Adrenal gland (tissue), 19 donors: ENCODE measurements at regions of chr1 and their contacts with region 1.

Region 1: DNA sequence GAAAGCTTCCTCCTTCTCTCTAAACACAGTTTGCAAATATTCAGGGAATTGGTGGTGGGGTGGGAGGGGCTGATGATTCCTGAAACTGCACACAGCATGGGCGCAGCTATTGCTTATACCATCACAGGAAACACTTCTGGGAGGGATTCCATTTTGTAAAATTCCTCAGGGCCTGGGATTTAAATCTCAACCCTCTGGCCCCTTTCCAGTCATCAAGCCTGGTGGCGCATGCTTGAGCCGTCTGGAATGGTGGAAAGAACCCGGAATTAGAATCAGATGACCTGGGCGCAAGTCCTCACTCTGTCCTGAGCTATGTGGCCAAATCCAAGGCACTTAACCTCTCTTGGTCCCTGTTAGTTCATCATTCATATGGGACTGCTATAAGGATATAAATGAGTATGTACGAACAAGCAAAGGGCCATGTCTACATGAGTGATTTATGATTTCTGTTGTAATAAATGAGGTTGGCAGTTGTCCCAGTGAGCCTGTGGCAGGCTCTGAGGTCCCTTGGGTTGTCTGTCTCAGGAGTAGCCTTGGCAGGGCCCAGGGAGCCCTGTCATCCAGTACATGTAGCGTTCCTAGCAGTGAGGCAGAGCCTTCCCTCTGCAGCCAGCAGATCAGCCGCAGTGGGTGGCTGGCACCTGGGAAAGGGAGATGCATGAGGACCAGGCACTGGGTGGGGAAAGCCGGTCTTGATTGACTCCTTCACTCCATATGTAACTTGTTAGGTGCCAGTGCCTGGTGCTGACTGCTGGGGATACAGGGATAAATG is 72.0 kb downstream of the MAN1C1 start:
- DNase-seq: peak; percentile 50 to 88 (median 64)
- H3K4me3 ChIP-seq: no peak overlapping the region
- H3K27ac ChIP-seq: peak overlapping the region in 4 of 5 donors; percentile 20 to 74 (median 46)
- H3K4me1 ChIP-seq: peaks cover 3 to 36% of the 10 kb centered on the region in 2 donors
- H3K27me3 ChIP-seq: no peaks in the 10 kb centered on the region
- CTCF ChIP-seq: no peak
- POLR2A ChIP-seq: peak in 1 of 2 donors; percentile 37

Region 2: DNA sequence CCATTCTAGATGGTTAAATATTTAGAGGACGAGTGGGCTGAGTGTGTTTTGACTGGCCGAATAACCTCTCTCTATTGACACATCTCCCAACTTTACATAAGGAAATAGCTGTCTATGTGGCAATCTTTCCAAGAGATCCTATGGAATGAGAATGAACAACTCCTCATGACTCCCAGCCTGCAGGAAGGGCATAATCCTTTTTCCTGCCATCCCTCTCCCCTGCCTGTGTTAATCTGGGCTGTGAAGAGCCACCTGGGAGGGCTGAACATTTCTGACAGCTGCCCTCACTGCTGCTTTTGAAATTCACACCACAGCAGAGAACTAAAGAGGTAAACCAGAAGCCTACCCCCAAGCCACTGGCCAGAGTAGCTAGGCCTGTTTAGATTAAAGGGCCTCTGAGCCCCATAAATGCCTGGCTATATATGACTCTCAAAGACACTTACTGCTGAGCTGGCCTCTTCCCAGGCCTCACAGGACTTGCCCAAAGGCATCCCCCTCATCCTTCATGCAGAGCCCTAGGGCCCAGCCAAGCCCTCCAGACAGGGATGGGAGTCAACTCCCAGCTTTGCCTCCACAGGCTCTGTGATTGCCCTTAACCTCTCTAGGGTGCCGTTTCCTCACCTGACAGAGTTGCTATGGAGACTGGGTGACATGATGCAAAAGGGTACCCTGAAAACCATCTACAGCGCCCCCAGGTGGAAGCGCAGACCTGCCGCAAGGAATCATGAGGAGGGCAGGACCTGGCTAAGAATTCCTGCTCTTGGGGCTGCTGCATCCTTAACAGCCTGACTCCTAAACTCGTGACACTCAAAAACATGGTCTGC is 187.1 kb before region 1 on chr1:
- intact Hi-C with region 1: no loop called
- DNase-seq: peak in 2 of 7 donors; percentile 22 to 46
- H3K4me3 ChIP-seq: no peak overlapping the region
- H3K27ac ChIP-seq: no peak overlapping the region
- H3K4me1 ChIP-seq: peaks cover 0 to 8% of the 10 kb centered on the region in 2 donors
- H3K27me3 ChIP-seq: no peaks in the 10 kb centered on the region
- CTCF ChIP-seq: peak in 3 of 6 experiments; percentile 5 to 9 (median 6)
- POLR2A ChIP-seq: no peak

Region 3: DNA sequence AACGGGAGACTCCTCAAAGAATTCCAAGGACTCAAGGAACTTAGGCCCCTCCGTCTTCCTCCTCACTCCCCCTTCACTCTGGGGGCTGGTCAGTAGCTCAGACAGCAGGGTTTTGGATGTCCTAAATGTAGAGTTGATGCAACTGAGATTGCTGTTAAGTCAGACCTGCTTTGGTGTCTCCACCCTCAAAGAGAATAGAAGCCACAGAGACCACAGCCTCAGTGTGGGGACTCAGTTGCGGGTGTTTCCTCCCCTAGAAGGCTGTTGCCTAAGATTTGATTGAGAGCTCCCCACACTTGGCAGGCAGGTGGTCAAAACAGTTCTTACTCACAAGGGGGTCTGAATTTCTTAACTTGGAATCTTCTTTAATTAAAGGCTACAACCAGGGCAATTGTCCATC is 64.4 kb before region 1 on chr1:
- intact Hi-C with region 1: loop called in 1 of 2 experiments (anchors 10 kb)
- DNase-seq: no peak
- H3K4me3 ChIP-seq: no peak overlapping the region
- H3K27ac ChIP-seq: no peak overlapping the region
- H3K4me1 ChIP-seq: peaks cover 0 to 34% of the 10 kb centered on the region in 2 donors
- H3K27me3 ChIP-seq: no peaks in the 10 kb centered on the region
- CTCF ChIP-seq: no peak
- POLR2A ChIP-seq: no peak

Region 4: DNA sequence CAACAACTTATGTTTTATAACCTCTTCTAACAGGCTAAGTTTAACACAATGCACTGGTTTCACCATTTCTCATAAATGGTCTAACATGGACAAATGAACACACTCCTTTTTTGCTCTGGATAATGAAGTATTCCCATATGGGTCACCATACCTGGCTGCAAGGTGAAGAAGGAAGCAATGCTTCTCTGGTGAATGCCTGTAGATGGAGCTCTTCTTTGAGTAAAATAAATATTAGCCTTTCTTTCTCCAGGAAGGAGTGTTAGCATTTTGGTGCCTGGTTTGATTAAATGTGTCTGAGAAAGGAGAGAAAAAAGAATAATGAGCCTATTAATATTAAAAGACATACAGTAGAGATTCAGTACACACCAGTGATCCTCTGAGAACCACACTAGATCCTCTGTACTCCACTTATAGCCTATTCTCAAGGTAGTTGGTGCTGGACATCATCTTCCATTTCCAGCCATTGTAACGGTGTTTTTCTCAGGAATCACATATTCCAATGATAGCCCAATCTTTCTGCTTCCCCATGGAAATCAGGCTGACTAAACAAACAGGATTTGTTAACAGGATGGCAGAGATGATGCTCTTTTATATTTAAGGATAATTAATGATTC is 148.8 kb after region 1 on chr1:
- intact Hi-C with region 1: no loop called
- DNase-seq: no peak
- H3K4me3 ChIP-seq: no peak overlapping the region
- H3K27ac ChIP-seq: no peak overlapping the region
- H3K4me1 ChIP-seq: peaks cover 18 to 41% of the 10 kb centered on the region in 2 donors
- H3K27me3 ChIP-seq: no peaks in the 10 kb centered on the region
- CTCF ChIP-seq: peak in 4 of 6 experiments; percentile 8 to 21 (median 20)
- POLR2A ChIP-seq: no peak